ENCODE measurements at regions of chr19 and their contacts with region 1.

Region 1: GRCh38 chr19:39846176-39846677 is at the start of gene FBL:
- DNase-seq: peak; percentile 97
- H3K4me3 ChIP-seq: peak within 1 kb of the TSS; percentile 80 to 92 (median 86)
- H3K27ac ChIP-seq: peak within 1 kb of the TSS; percentile 78 to 90 (median 87)
- H3K4me1 ChIP-seq: peaks cover 0 to 40% (median 32%) of the 10 kb centered on the region in 4 donors
- H3K27me3 ChIP-seq: no peaks in the 10 kb centered on the region
- CTCF ChIP-seq: no peak
- EP300 ChIP-seq: no peak
- POLR2A ChIP-seq: peak in 1 of 2 donors; percentile 59
- total RNA-seq, gene FBL: 96.4 to 147 (median 109) TPM

Region 2: GRCh38 chr19:39792999-39793546 is 53.2 kb before region 1 on chr19:
- intact Hi-C with region 1: loop called (anchors 1 kb)
- DNase-seq: peak; percentile 81
- H3K4me3 ChIP-seq: peak overlapping the region; percentile 29 to 48 (median 42)
- H3K27ac ChIP-seq: no peak overlapping the region
- H3K4me1 ChIP-seq: no peaks in the 10 kb centered on the region
- H3K27me3 ChIP-seq: peaks cover 0 to 6% (median 0%) of the 10 kb centered on the region in 3 donors
- CTCF ChIP-seq: peak; percentile 70 to 90 (median 81)
- EP300 ChIP-seq: no peak
- POLR2A ChIP-seq: no peak

Region 3: DNA sequence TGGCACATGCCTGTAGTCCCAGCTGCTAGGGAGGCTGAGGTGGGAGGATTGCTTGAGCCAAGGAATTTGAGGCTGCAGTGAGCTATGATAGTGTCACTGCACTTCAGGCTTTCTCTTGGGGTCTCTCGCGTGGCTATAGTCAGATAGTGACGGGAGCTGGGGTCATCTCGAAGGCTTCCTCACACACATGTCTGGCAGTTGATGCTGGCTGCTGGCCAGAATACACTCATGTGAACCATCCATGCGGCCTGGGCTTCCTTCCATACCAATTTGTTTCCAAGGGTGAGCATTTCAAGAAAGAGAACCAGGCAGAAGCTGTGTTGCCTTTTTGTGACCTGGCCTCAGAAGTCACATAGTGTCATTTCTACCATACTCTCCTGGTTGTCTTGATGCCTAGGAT is 41.1 kb before region 1 on chr19:
- intact Hi-C with region 1: no loop called
- DNase-seq: no peak
- H3K4me3 ChIP-seq: no peak overlapping the region
- H3K27ac ChIP-seq: no peak overlapping the region
- H3K4me1 ChIP-seq: no peaks in the 10 kb centered on the region
- H3K27me3 ChIP-seq: peaks cover 0 to 18% (median 12%) of the 10 kb centered on the region in 3 donors
- CTCF ChIP-seq: no peak
- EP300 ChIP-seq: no peak
- POLR2A ChIP-seq: no peak

Region 4: DNA sequence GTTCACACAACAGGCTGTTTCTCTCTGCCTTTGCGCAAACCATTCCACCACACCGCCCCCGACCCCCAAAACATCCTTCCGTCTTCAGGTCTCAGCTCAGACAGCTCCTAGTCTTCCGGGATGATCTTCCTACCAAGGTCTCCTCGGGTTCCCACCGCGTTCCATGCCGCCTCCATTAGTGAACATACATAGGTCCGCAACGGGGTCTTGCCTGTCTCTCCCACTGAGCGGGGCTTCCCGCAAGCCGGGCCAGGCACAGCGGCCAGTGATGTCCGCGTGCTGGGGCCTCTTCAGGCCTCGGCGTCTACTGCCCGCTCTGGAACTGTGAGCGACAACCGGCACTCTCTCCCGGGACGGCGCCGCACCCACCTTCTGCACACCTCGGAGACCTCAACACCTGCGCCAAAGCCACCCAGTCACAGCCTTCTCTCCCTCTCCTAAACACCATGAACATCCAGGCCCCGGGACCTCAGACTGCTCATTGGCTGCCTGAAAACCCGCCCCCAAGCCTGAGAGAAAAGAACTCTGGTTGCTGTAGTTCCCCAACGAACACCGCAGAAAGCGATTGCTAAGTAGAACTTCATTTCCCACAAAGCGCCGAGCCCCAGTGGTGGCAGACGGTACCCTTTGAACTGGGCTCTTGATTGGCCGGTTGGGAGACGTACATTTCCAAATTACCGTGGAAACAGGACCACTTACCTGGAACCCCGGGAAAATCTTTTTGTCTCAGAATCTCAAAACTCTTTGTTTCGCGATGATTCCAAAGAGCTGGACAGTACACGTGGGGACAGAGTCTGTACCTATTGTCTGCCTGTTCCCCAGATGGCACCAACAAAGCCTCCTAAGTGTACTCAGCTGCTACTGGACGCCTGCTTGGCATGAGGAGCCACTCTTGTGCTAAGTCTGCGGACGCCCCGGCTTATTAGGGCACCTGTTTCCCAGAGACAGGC is 21.8 kb before region 1 on chr19:
- intact Hi-C with region 1: loop called (anchors 2 kb)
- DNase-seq: peak; percentile 96
- H3K4me3 ChIP-seq: peak overlapping the region; percentile 63 to 82 (median 72)
- H3K27ac ChIP-seq: peak overlapping the region; percentile 75 to 84 (median 82)
- H3K4me1 ChIP-seq: peaks cover 0 to 15% (median 14%) of the 10 kb centered on the region in 4 donors
- H3K27me3 ChIP-seq: no peaks in the 10 kb centered on the region
- CTCF ChIP-seq: peak in 1 of 4 experiments; percentile 15
- EP300 ChIP-seq: no peak
- POLR2A ChIP-seq: no peak

Region 5: DNA sequence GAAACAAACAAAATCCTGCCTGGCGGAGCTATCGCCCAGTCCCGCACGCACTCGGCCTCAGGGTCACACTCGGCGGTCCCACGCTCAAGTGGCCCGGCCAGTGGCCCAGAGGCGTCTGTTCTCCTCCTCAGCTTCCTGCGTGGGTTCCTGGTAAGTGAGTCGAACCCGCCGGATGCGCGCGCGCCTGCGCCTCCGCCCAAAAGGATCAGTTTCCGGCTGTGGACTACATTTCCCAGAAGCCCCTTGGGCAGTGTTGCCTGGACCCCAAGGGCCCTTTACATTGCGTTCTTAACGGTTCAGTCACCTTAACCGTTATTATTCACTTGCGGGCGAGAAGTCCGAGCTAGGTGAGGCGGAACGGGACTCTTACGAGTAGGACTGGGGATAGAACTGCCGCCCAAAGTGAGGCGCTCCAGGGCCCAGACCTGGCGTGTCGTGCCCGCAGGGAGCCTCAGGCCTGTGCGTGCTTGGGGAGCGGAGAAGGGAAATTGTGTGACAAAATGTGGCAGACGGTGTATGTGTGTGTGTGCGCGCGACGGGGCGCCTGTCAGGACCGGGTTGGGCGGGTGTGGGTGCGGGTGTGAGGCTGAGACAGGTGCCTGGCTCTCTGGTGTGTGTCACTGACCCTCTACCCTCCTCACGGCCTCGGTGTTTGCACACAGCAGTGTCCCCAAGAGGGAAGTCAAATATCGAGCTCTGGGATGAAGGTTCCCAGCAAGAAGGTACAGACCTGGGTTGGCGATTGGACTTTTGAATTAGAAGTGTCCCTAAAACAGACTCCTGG is 150.8 kb after region 1 on chr19 and contains the start of gene ZNF546:
- intact Hi-C with region 1: loop called (anchors 5 kb)
- DNase-seq: peak; percentile 95
- H3K4me3 ChIP-seq: peak within 1 kb of the TSS; percentile 56 to 80 (median 65)
- H3K27ac ChIP-seq: peak within 1 kb of the TSS; percentile 83 to 87 (median 86)
- H3K4me1 ChIP-seq: peaks cover 0 to 22% (median 13%) of the 10 kb centered on the region in 4 donors
- H3K27me3 ChIP-seq: no peaks in the 10 kb centered on the region
- CTCF ChIP-seq: no peak
- EP300 ChIP-seq: no peak
- POLR2A ChIP-seq: peak; percentile 78 to 86
- total RNA-seq, gene ZNF546: 6.0 to 12.8 (median 8.3) TPM

Measured in sigmoid colon (tissue), 7 donors.